Activated naive CD8-positive, alpha-beta T cell treated with anti-CD3 and anti-CD28 coated beads, Interleukin-2, amount 10 ng/mL, durations not matched to agents 7 days and 5 days (primary cell): ENCODE measurements at regions of chr17 and their contacts with region 1.

Region 1: GRCh38 chr17:8189711-8190477 is at the start of gene BORCS6:
- DNase-seq: peak; percentile 90
- ATAC-seq: peak; percentile 66
- H3K4me3 Mint-ChIP-seq: no peak within 1 kb of the TSS
- H3K27ac Mint-ChIP-seq: peak within 1 kb of the TSS; percentile 95
- H3K4me1 Mint-ChIP-seq: peaks cover 10% of the 10 kb centered on the region
- H3K27me3 Mint-ChIP-seq: no peaks in the 10 kb centered on the region
- total RNA-seq, gene BORCS6: 15.7 to 16.5 TPM

Region 2: GRCh38 chr17:8138672-8139371 is 51.1 kb before region 1 on chr17:
- POLR2A ChIA-PET with region 1: interaction called, 10 read pairs
- DNase-seq: peak; percentile 97
- ATAC-seq: peak; percentile 97
- H3K4me3 Mint-ChIP-seq: no peak overlapping the region
- H3K27ac Mint-ChIP-seq: no peak overlapping the region
- H3K4me1 Mint-ChIP-seq: peaks cover 4% of the 10 kb centered on the region
- H3K27me3 Mint-ChIP-seq: peaks cover 6% of the 10 kb centered on the region

Region 3: GRCh38 chr17:8162233-8162996 is 27.5 kb before region 1 on chr17 and contains the start of gene VAMP2:
- POLR2A ChIA-PET with region 1: interaction called, 13 read pairs
- DNase-seq: peak; percentile 95
- ATAC-seq: peak; percentile 41
- H3K4me3 Mint-ChIP-seq: peak within 1 kb of the TSS; percentile 88
- H3K27ac Mint-ChIP-seq: peak within 1 kb of the TSS; percentile 100
- H3K4me1 Mint-ChIP-seq: peaks cover 47% of the 10 kb centered on the region
- H3K27me3 Mint-ChIP-seq: no peaks in the 10 kb centered on the region
- total RNA-seq, gene VAMP2: 116 to 118 TPM

Region 4: DNA sequence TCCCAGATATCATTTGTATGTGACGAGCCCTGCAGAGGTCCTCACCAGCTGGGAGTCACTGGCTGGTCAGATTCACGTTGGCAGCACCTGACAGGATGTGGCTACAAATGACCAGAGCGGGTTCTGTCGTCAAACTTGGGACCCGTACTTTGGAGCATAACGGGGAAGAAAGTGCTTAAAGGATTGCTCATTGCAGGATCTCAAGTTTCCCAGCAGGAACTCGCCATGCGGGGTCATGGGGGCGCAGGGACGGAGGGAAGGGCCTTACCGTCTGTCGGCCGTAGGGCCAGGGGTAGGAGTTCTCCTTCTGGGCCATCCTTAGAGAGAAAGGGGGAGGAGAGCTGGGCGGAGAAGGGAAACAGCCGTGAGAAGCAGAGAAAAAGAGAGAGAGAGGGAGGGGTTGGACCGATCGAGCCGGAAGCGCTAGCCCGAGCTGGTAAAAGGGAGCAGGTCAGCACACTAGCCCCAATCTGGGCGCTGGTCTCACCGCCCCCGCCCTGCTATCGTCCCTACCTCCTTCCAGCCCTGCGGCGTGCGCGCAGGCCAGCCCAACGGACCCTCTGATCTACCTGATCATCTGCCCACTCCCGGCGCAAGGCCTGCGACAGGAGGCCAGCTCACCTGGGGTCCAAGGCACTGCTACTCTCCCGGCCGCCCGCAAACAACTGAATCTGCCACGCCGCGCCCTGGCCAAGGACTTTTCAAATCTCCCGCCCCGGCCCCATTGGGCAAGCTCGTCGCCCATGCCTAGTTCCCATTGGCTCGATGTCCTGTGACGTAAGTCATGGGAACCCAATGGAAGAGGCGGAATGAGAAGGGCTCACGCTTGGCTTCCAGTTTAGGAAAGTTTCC is 20.2 kb after region 1 on chr17 and contains the start of gene AURKB:
- POLR2A ChIA-PET with region 1: interaction called, 57 read pairs
- DNase-seq: peak; percentile 87
- ATAC-seq: peak; percentile 97
- H3K4me3 Mint-ChIP-seq: peak within 1 kb of the TSS; percentile 96
- H3K27ac Mint-ChIP-seq: peak within 1 kb of the TSS; percentile 92
- H3K4me1 Mint-ChIP-seq: peaks cover 27% of the 10 kb centered on the region
- H3K27me3 Mint-ChIP-seq: peaks cover 3% of the 10 kb centered on the region
- total RNA-seq, gene AURKB: 128 to 152 TPM

Region 5: GRCh38 chr17:8248751-8249607 is 59.1 kb after region 1 on chr17 and contains the start of gene PFAS:
- POLR2A ChIA-PET with region 1: interaction called, 37 read pairs
- DNase-seq: peak; percentile 99
- ATAC-seq: peak; percentile 68
- H3K4me3 Mint-ChIP-seq: peak within 1 kb of the TSS; percentile 99
- H3K27ac Mint-ChIP-seq: peak within 1 kb of the TSS; percentile 99
- H3K4me1 Mint-ChIP-seq: peaks cover 30% of the 10 kb centered on the region
- H3K27me3 Mint-ChIP-seq: no peaks in the 10 kb centered on the region
- total RNA-seq, gene PFAS: 47.2 to 56.8 TPM